Calu3 (cell line): ENCODE measurements at regions of chr7 and their contacts with region 1.

Region 1: GRCh38 chr7:8035647-8036518 is 67.3 kb downstream of the GLCCI1 start:
- DNase-seq: no peak
- H3K4me3 Mint-ChIP-seq: no peak overlapping the region
- H3K27ac Mint-ChIP-seq: no peak overlapping the region
- H3K4me1 Mint-ChIP-seq: peaks cover 16% of the 10 kb centered on the region
- H3K27me3 Mint-ChIP-seq: no peaks in the 10 kb centered on the region
- CTCF ChIP-seq: peak; percentile 68

Region 2: GRCh38 chr7:7595451-7595850 is 440.4 kb before region 1 on chr7:
- CTCF ChIA-PET with region 1: interaction called, 3 read pairs
- intact Hi-C with region 1: loop called (anchors 5 kb)
- DNase-seq: no peak
- H3K4me3 Mint-ChIP-seq: no peak overlapping the region
- H3K27ac Mint-ChIP-seq: no peak overlapping the region
- H3K4me1 Mint-ChIP-seq: no peaks in the 10 kb centered on the region
- H3K27me3 Mint-ChIP-seq: no peaks in the 10 kb centered on the region
- CTCF ChIP-seq: peak; percentile 46

Region 3: GRCh38 chr7:7909376-7909775 is 126.5 kb before region 1 on chr7:
- CTCF ChIA-PET with region 1: interaction called, 5 read pairs
- intact Hi-C with region 1: loop called (anchors 10 kb)
- DNase-seq: no peak
- H3K4me3 Mint-ChIP-seq: no peak overlapping the region
- H3K27ac Mint-ChIP-seq: no peak overlapping the region
- H3K4me1 Mint-ChIP-seq: peaks cover 18% of the 10 kb centered on the region
- H3K27me3 Mint-ChIP-seq: no peaks in the 10 kb centered on the region
- CTCF ChIP-seq: no peak